ENCODE measurements at regions of chr5 and their contacts with region 1.

Region 1: GRCh38 chr5:138352071-138352721 is at the start of gene KDM3B:
- DNase-seq: peak; percentile 88 to 98 (median 93)
- ATAC-seq: peak; percentile 69 to 81
- H3K4me3 Mint-ChIP-seq: peak within 1 kb of the TSS; percentile 90 to 100 (median 96)
- H3K27ac Mint-ChIP-seq: peak within 1 kb of the TSS; percentile 93 to 98 (median 95)
- H3K4me1 Mint-ChIP-seq: peaks cover 27 to 54% (median 47%) of the 10 kb centered on the region in 4 donors
- H3K27me3 Mint-ChIP-seq: no peaks in the 10 kb centered on the region
- polyA plus RNA-seq, gene KDM3B: 6.9 to 12.3 (median 10.6) TPM

Region 2: DNA sequence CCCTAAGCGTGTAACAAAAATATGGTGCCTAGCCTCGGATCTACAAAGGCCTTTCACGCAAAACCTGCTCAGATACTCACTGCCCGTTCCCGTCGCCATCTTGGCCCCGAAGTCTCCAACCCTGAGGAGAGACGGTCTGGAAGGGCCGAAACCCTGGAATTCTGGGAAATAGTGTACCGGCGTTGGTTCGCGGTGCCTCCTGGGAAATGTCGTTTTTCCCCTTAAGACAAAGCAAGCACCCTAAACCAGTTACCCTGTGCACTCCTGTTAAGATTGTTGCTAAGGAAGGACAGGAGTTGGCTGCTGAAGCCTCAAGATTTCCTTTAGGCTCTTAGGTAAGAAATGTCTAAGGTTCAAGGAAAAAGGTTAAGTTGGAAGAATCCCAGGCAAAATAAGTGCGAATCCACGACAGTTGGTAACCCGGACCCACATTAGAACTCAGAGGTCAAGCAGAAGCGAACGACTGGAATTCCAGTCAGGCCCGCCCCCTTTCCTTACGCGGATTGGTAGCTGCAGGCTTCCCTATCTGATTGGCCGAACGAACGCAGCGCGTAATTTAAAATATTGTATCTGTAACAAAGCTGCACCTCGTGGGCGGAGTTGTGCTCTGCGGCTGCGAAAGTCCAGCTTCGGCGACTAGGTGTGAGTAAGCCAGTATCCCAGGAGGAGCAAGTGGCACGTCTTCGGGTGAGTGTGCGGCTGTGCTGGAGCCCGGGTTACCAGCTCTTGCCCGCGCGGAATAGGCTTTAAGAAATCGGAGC is 173.5 kb before region 1 on chr5 and contains the starts of genes BRD8 and KIF20A:
- POLR2A ChIA-PET with region 1: interaction called, 10 read pairs
- DNase-seq: peak; percentile 76 to 95 (median 86)
- ATAC-seq: peak; percentile 84 to 91
- H3K4me3 Mint-ChIP-seq: peak within 1 kb of the TSS in 5 of 10 donors; percentile 6 to 67 (median 42)
- H3K27ac Mint-ChIP-seq: peak within 1 kb of the TSS in 3 of 10 donors; percentile 5 to 81 (median 9)
- H3K4me1 Mint-ChIP-seq: peaks cover 0 to 13% (median 6%) of the 10 kb centered on the region in 4 donors
- H3K27me3 Mint-ChIP-seq: no peaks in the 10 kb centered on the region
- polyA plus RNA-seq, gene BRD8: 24.0 to 37.7 (median 31.8) TPM
- polyA plus RNA-seq, gene KIF20A: not detected

Region 3: GRCh38 chr5:138331449-138332368 is 20.5 kb before region 1 on chr5 and contains the start of gene CDC25C:
- POLR2A ChIA-PET with region 1: interaction called, 274 read pairs
- DNase-seq: peak; percentile 88 to 98 (median 96)
- ATAC-seq: peak; percentile 99 to 100
- H3K4me3 Mint-ChIP-seq: peak within 1 kb of the TSS; percentile 82 to 97 (median 88)
- H3K27ac Mint-ChIP-seq: peak within 1 kb of the TSS; percentile 0 to 92 (median 72)
- H3K4me1 Mint-ChIP-seq: peaks cover 7 to 17% (median 16%) of the 10 kb centered on the region in 4 donors
- H3K27me3 Mint-ChIP-seq: no peaks in the 10 kb centered on the region
- polyA plus RNA-seq, gene CDC25C: not detected

Region 4: GRCh38 chr5:139660923-139661814 is 1309.0 kb after region 1 on chr5:
- POLR2A ChIA-PET with region 1: no interaction called
- DNase-seq: no peak
- ATAC-seq: peak in 1 of 2 donors; percentile 50
- H3K4me3 Mint-ChIP-seq: peak overlapping the region in 2 of 10 donors; percentile 24 to 57
- H3K27ac Mint-ChIP-seq: peak overlapping the region in 2 of 10 donors; percentile 52 to 59
- H3K4me1 Mint-ChIP-seq: peaks cover 13 to 84% (median 28%) of the 10 kb centered on the region in 4 donors
- H3K27me3 Mint-ChIP-seq: peaks cover 0 to 7% (median 0%) of the 10 kb centered on the region in 5 donors